CD8-positive, alpha-beta T cell (primary cell): ENCODE measurements at regions of chrX and their contacts with region 1.

Region 1: DNA sequence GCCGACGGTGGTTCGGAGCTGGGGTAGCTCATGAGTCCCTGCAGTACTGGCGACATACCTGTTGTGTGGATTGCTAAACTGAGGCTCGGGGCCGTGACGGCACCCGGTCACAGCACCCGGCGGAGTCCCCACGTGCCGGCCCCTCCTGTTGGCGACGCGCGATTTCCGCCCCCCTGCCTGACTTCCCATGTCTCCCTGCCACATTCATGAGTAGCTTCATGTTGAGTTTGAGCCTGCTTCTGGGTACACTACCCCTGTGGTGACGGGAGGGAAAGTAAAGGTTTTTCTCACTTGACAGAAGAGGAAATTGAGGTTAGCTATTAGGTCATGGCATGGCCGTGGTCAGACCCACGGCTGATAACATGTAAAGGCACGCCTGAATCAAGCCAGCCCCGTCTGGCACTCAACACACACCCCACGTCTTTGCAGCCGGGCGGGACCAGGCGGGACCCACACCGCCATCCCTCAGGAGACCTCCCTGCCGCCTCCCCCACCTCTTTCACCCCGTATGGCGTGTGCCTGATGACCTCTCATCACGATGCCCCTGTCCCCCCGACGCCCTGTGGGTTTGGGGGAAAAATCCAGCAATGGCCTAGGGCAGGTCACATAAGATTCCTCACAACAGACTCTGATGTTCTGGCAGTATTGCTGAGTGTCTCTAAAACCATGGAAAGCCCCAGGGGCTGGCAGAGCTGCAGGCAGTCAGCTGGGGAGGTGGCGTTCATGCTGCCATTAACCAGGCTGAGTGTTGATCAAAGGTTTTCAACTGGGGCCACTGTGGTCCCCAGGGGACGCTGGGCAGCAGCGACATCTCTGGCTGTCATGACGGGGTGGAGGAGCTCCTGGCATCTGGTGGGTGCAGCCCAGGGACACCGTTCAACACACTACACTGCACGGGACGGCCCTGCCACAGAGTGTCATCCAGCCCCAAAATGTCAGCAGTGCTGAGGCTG is 29.2 kb downstream of the P2RY8 start:
- DNase-seq: peak in 8 of 9 experiments; percentile 33 to 94 (median 52)
- ATAC-seq: peak; percentile 75
- H3K4me3 ChIP-seq: no peak overlapping the region
- H3K4me3 Mint-ChIP-seq: no peak overlapping the region
- H3K27ac ChIP-seq: peak overlapping the region; percentile 31 to 70
- H3K27ac Mint-ChIP-seq: no peak overlapping the region
- H3K4me1 ChIP-seq: peaks cover 15% of the 10 kb centered on the region
- H3K4me1 Mint-ChIP-seq: peaks cover 39% of the 10 kb centered on the region
- H3K27me3 ChIP-seq: no peaks in the 10 kb centered on the region
- H3K27me3 Mint-ChIP-seq: no peaks in the 10 kb centered on the region
- CTCF ChIP-seq: no peak

Region 2: GRCh38 chrX:1491851-1492349 is 15.9 kb before region 1 on chrX:
- CTCF ChIA-PET with region 1: no interaction called
- POLR2A ChIA-PET with region 1: no interaction called
- intact Hi-C with region 1: loop called in 1 of 2 experiments (anchors 2 kb)
- DNase-seq: peak in 5 of 9 experiments; percentile 41 to 78 (median 68)
- ATAC-seq: peak; percentile 64
- H3K4me3 ChIP-seq: no peak overlapping the region
- H3K4me3 Mint-ChIP-seq: no peak overlapping the region
- H3K27ac ChIP-seq: peak overlapping the region in 1 of 2 experiments; percentile 8
- H3K27ac Mint-ChIP-seq: peak overlapping the region; percentile 80
- H3K4me1 ChIP-seq: peaks cover 11% of the 10 kb centered on the region
- H3K4me1 Mint-ChIP-seq: peaks cover 23% of the 10 kb centered on the region
- H3K27me3 ChIP-seq: no peaks in the 10 kb centered on the region
- H3K27me3 Mint-ChIP-seq: no peaks in the 10 kb centered on the region
- CTCF ChIP-seq: no peak

Region 3: GRCh38 chrX:1601051-1601767 is 93.4 kb after region 1 on chrX:
- CTCF ChIA-PET with region 1: no interaction called
- POLR2A ChIA-PET with region 1: no interaction called
- intact Hi-C with region 1: no loop called
- DNase-seq: no peak
- ATAC-seq: no peak
- H3K4me3 ChIP-seq: no peak overlapping the region
- H3K4me3 Mint-ChIP-seq: no peak overlapping the region
- H3K27ac ChIP-seq: no peak overlapping the region
- H3K27ac Mint-ChIP-seq: no peak overlapping the region
- H3K4me1 ChIP-seq: no peaks in the 10 kb centered on the region
- H3K4me1 Mint-ChIP-seq: peaks cover 8% of the 10 kb centered on the region
- H3K27me3 ChIP-seq: no peaks in the 10 kb centered on the region
- H3K27me3 Mint-ChIP-seq: no peaks in the 10 kb centered on the region
- CTCF ChIP-seq: no peak